Mammary epithelial cell (primary cell): ENCODE measurements at regions of chr6 and their contacts with region 1.

Region 1: GRCh38 chr6:145633981-145634627 is 101.2 kb downstream of the EPM2A start:
- DNase-seq: peak; percentile 45
- H3K4me3 ChIP-seq: no peak overlapping the region
- H3K27ac ChIP-seq: no peak overlapping the region
- H3K4me1 ChIP-seq: no peaks in the 10 kb centered on the region
- H3K27me3 ChIP-seq: no peaks in the 10 kb centered on the region
- CTCF ChIP-seq: peak; percentile 86

Region 2: GRCh38 chr6:144931172-144932035 is 702.7 kb before region 1 on chr6:
- CTCF ChIA-PET with region 1: no interaction called
- dilution Hi-C with region 1: no loop called
- in situ Hi-C with region 1: no loop called
- intact Hi-C with region 1: loop called (anchors 10 kb)
- DNase-seq: peak; percentile 39
- H3K4me3 ChIP-seq: no peak overlapping the region
- H3K27ac ChIP-seq: no peak overlapping the region
- H3K4me1 ChIP-seq: no peaks in the 10 kb centered on the region
- H3K27me3 ChIP-seq: no peaks in the 10 kb centered on the region
- CTCF ChIP-seq: peak; percentile 72 to 77

Region 3: GRCh38 chr6:145137426-145137825 is 496.7 kb before region 1 on chr6:
- CTCF ChIA-PET with region 1: interaction called, 3 read pairs
- dilution Hi-C with region 1: no loop called
- in situ Hi-C with region 1: no loop called
- intact Hi-C with region 1: loop called (anchors 5 kb)
- DNase-seq: no peak
- H3K4me3 ChIP-seq: no peak overlapping the region
- H3K27ac ChIP-seq: no peak overlapping the region
- H3K4me1 ChIP-seq: no peaks in the 10 kb centered on the region
- H3K27me3 ChIP-seq: peaks cover 2% of the 10 kb centered on the region
- CTCF ChIP-seq: peak; percentile 21 to 44

Region 4: DNA sequence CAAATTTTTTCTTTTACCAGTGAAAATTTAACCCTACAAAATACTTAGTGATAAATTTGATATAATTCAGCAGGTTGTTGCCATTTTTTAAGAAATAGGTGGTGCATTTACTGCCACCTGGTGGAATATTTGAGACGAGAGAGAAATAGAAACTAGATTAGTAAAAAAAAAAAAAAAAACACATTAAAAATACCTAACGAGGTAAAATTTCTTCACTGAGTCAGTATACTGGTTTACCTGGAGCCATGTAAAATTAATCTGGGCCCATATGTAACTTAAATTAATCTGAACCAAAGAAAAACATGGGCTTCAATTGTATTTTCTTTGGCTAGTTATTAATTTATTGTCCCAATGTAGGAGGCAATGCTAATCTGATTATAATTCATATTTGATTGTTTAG is 419.5 kb before region 1 on chr6:
- CTCF ChIA-PET with region 1: no interaction called
- dilution Hi-C with region 1: no loop called
- in situ Hi-C with region 1: loop called in 1 of 2 experiments (anchors 25 kb)
- intact Hi-C with region 1: loop called (anchors 1 kb)
- DNase-seq: peak; percentile 10
- H3K4me3 ChIP-seq: no peak overlapping the region
- H3K27ac ChIP-seq: no peak overlapping the region
- H3K4me1 ChIP-seq: no peaks in the 10 kb centered on the region
- H3K27me3 ChIP-seq: no peaks in the 10 kb centered on the region
- CTCF ChIP-seq: peak; percentile 36 to 49

Region 5: DNA sequence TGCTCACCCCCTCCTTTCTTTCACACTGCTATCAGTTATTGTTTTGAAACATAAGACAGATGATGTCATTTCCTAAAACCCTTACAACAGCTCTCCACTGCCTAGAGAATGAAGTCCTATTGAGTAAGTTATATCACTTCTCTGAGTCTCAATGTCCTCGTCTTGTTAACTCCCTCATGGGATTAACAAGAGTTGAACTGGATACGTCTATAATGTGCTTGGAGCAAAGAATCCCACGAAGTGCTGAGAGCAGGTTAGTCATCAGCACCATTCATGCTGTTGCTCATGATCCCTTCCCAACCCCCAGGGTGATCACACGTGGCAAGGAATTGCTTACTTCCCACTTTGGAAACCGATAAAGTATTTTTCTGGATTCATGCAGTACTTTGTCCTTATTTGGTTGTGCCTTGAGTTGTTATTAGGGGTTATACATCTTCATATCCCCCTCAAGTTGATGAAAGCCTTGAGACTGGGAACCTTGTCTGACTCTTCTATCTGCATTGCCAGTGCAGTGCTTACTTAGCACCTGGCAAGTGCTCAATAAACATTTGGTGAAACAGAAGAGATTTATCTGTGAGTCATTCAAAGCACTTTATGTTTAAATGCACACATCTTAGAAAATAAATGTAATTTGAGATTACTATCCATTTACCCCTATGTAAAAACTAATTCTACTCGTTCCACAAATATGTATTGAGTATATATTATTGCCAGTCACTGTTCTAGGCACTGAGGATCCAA is 386.3 kb before region 1 on chr6:
- CTCF ChIA-PET with region 1: no interaction called
- dilution Hi-C with region 1: no loop called
- in situ Hi-C with region 1: no loop called
- intact Hi-C with region 1: no loop called
- DNase-seq: peak; percentile 83
- H3K4me3 ChIP-seq: no peak overlapping the region
- H3K27ac ChIP-seq: no peak overlapping the region
- H3K4me1 ChIP-seq: no peaks in the 10 kb centered on the region
- H3K27me3 ChIP-seq: peaks cover 3% of the 10 kb centered on the region
- CTCF ChIP-seq: no peak

Region 6: DNA sequence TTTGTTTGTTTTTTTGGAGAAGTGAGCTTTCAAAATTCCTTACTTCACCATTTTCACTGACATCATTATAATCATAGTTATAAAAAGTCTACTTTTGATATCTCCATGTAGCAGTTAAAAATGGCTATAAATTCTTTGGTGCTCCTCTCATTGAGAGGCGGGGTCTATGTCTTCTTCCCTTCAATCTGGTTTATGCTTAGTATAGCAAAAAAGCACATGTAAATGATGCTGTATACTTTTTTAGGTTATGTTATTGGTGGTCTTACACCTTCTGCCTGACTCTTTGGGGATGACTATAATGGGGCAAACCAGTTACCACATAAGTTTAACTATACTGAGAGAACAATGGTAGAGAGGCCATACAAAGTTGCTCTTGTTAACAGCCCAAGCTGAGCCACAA is 188.4 kb before region 1 on chr6:
- CTCF ChIA-PET with region 1: no interaction called
- dilution Hi-C with region 1: no loop called
- in situ Hi-C with region 1: no loop called
- intact Hi-C with region 1: loop called (anchors 10 kb)
- DNase-seq: no peak
- H3K4me3 ChIP-seq: no peak overlapping the region
- H3K27ac ChIP-seq: no peak overlapping the region
- H3K4me1 ChIP-seq: no peaks in the 10 kb centered on the region
- H3K27me3 ChIP-seq: no peaks in the 10 kb centered on the region
- CTCF ChIP-seq: no peak

Region 7: GRCh38 chr6:145498425-145498824 is 135.7 kb before region 1 on chr6:
- CTCF ChIA-PET with region 1: no interaction called
- dilution Hi-C with region 1: no loop called
- in situ Hi-C with region 1: no loop called
- intact Hi-C with region 1: loop called (anchors 5 kb)
- DNase-seq: no peak
- H3K4me3 ChIP-seq: no peak overlapping the region
- H3K27ac ChIP-seq: no peak overlapping the region
- H3K4me1 ChIP-seq: no peaks in the 10 kb centered on the region
- H3K27me3 ChIP-seq: no peaks in the 10 kb centered on the region
- CTCF ChIP-seq: no peak

Region 8: GRCh38 chr6:145544041-145544440 is 90.1 kb before region 1 on chr6:
- CTCF ChIA-PET with region 1: no interaction called
- dilution Hi-C with region 1: no loop called
- in situ Hi-C with region 1: no loop called
- intact Hi-C with region 1: no loop called
- DNase-seq: peak; percentile 93
- H3K4me3 ChIP-seq: no peak overlapping the region
- H3K27ac ChIP-seq: peak overlapping the region; percentile 83
- H3K4me1 ChIP-seq: peaks cover 59% of the 10 kb centered on the region
- H3K27me3 ChIP-seq: no peaks in the 10 kb centered on the region
- CTCF ChIP-seq: no peak

Region 9: DNA sequence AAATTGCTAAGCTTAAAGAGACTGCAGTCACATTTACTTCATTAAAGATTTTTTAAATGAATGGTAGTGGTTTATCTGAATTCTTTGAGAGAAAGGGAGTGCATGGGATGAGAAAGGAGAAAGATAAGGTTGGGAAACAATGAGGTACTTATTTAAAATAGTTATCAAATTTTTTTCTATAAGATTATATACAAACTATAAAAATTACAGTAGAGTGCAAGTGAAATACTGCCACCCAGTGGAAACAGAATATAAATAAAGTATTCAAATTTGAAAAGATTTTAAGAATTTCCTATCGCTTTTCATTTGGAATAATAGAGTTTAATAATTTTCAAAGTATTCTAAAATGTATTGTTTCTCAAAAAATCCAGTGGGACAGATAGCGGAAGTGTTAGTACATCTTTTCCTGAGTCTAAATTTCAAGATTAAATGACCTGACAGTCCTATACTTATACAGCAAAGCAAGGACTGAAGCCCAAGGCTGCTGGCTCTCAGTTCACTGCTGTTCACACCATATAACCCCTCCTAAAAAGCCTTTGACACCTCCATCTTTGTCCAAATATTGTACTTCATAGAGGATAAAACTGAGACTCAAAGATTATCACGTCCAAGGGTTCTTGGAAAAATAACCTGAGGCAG is 70.2 kb after region 1 on chr6:
- CTCF ChIA-PET with region 1: interaction called, 8 read pairs
- dilution Hi-C with region 1: no loop called
- in situ Hi-C with region 1: no loop called
- intact Hi-C with region 1: loop called (anchors 2 kb)
- DNase-seq: no peak
- H3K4me3 ChIP-seq: no peak overlapping the region
- H3K27ac ChIP-seq: no peak overlapping the region
- H3K4me1 ChIP-seq: peaks cover 16% of the 10 kb centered on the region
- H3K27me3 ChIP-seq: no peaks in the 10 kb centered on the region
- CTCF ChIP-seq: peak; percentile 20 to 47